CD4-positive, alpha-beta memory T cell (primary cell): ENCODE measurements at regions of chr6 and their contacts with region 1.

Region 1: DNA sequence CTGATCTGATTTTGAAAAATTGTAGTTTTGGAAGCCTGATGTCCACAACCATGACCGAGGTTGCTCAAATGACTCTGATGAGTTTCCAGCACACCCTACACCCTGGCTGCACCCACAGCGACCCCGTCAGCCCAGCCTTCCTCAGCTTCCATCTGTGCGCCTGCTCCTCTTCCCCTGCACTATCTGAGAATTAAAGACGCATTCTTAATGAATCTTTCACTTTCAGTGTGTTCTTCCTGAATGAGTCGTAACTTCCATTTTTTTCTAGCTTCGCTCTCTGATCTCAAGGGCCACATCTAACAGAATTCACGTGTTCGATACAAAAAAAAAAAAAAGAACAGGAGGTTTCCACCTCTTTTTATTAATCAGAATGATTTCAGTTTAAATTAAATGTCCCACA is 21.3 kb upstream of the RREB1 start:
- DNase-seq: peak in 4 of 5 donors; percentile 47 to 56 (median 52)
- H3K4me3 ChIP-seq: peak overlapping the region; percentile 13 to 44
- H3K4me3 Mint-ChIP-seq: peak overlapping the region; percentile 72 to 97 (median 86)
- H3K27ac ChIP-seq: peak overlapping the region; percentile 17
- H3K27ac Mint-ChIP-seq: peak overlapping the region; percentile 76 to 96 (median 88)
- H3K4me1 ChIP-seq: peaks cover 25% of the 10 kb centered on the region
- H3K4me1 Mint-ChIP-seq: peaks cover 17 to 39% (median 24%) of the 10 kb centered on the region in 4 donors
- H3K27me3 ChIP-seq: no peaks in the 10 kb centered on the region
- H3K27me3 Mint-ChIP-seq: no peaks in the 10 kb centered on the region

Region 2: DNA sequence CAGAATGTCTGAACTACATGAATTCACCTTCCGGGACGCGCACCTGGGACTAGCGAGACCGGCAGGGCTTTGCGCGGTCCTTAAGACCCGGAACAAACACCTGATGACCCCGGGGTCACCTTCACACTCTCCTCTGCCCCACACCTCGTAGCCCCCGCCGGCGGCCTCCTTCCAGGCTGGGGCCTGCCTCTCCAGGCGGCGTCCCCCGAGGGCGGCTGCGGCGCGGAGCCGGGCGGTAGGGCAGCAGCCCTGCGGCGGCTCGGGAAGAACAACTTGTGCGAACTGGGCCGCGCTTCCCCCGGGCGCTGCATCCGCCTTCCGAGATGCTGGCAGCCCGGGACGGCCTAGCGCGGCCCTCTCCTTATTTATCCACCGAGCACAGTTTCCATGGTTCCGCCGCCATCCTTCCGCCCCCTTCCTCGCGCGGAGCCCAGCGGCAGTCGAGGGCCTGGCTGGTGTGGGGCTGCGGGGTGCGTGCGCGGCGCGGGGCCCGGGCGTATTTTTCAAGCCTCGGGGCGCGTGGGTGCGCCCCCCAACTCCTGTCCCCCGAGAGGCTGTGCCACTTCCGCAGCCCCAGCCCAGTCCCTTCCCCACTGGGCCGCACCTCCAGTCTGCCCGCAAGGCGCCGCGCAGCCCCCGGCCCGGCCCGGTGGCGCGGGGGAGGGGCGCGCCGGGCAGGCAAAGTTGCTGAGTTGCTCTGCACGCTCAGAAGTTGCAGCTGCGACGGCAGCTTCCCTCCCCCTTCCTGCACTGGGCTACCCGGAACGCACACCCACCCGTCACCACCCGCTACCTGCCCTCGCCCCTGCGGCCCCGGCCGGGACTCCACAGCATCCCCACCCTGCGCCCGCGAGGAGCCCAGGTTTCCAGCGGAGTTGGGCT is 35.0 kb before region 1 on chr6:
- CTCF ChIA-PET with region 1: interaction called, 3 read pairs
- POLR2A ChIA-PET with region 1: interaction called, 14 read pairs
- intact Hi-C with region 1: loop called (anchors 2 kb)
- DNase-seq: peak; percentile 57 to 69 (median 60)
- H3K4me3 ChIP-seq: peak overlapping the region; percentile 23 to 59
- H3K4me3 Mint-ChIP-seq: peak overlapping the region; percentile 65 to 85 (median 72)
- H3K27ac ChIP-seq: peak overlapping the region; percentile 25
- H3K27ac Mint-ChIP-seq: peak overlapping the region in 2 of 7 donors; percentile 57 to 60
- H3K4me1 ChIP-seq: peaks cover 8% of the 10 kb centered on the region
- H3K4me1 Mint-ChIP-seq: peaks cover 2 to 13% (median 9%) of the 10 kb centered on the region in 4 donors
- H3K27me3 ChIP-seq: no peaks in the 10 kb centered on the region
- H3K27me3 Mint-ChIP-seq: no peaks in the 10 kb centered on the region

Region 3: DNA sequence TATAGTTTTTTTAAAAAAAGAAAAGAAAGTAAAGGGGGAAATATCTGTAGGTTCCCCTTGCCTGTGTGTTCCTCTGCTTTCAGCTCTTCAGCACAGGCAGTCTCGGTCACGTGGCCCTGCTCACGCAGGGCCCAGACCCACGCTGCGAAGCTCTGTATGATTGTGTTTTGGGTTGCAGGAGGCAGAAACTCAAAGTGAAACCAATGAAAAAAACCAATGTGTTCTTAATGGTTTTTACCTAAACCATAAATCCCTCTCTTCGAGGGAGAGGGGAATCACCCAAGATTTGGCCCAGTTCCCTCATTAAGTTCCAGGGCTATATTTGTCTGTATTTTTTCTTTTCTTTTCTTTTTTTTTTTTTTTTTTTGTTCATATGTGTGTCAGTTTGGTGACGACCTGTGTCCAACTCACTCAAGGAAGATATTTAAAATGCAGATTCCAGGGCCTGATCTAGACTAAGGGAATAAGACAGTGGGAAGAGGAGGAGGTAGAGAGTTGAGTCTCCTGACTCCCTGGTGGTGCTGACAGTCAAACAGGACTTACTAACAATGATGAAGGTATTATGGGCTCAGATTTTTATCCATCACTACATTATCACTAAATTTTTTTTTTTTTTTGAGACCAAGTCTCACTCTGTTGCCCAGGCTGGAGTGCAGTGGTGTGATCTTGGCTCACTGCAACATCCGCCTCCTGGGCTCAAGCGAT is 12.5 kb before region 1 on chr6:
- CTCF ChIA-PET with region 1: interaction called, 11 read pairs
- POLR2A ChIA-PET with region 1: interaction called, 9 read pairs
- intact Hi-C with region 1: loop called (anchors 1 kb)
- DNase-seq: peak; percentile 43 to 63 (median 57)
- H3K4me3 ChIP-seq: no peak overlapping the region
- H3K4me3 Mint-ChIP-seq: peak overlapping the region in 7 of 8 donors; percentile 53 to 81 (median 72)
- H3K27ac ChIP-seq: no peak overlapping the region
- H3K27ac Mint-ChIP-seq: peak overlapping the region; percentile 68 to 94 (median 83)
- H3K4me1 ChIP-seq: peaks cover 5% of the 10 kb centered on the region
- H3K4me1 Mint-ChIP-seq: peaks cover 4 to 12% (median 10%) of the 10 kb centered on the region in 4 donors
- H3K27me3 ChIP-seq: no peaks in the 10 kb centered on the region
- H3K27me3 Mint-ChIP-seq: peaks cover 0 to 5% of the 10 kb centered on the region in 2 donors